Sigmoid colon (tissue), 7 donors: ENCODE measurements at regions of chr10 and their contacts with region 1.

Region 1: DNA sequence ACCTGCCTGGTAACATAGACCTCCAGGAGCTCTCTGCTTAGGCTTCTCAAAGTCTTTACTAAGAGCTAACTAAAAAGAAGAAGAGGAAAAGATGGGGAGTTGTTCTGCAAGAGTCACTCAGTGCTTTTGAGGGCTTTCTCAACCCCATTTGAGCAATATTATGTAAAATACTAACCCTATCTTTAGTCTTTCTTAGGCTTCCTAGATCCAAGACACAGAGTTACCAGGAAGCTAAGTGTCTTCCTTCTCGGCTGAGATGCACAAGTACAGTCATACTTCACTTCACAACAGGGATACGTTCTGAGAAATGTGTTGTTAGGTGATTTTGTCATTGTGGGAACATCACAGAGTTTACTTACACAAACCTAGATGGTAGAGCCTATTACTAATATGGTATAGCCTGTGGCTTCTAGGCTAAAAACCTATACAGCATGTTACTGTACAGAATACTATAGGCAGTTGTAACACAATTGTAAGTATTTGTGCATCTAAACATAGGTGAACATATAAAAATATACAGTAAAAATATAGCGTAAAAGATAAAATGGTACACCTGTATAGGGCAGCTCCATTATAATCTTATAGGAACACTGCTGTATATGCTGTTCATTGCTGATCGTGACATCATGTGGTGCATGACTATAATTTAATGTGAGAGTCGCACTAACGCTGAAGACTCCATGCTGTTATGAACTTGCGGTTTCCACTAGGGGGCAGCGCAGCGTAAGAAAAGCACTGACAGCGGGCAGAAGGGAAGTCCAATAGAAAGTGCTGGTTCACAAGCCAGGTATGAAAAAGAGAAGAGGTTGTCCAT is 16.3 kb downstream of the ANKRD22 start:
- DNase-seq: peak; percentile 91
- H3K4me3 ChIP-seq: no peak overlapping the region
- H3K27ac ChIP-seq: no peak overlapping the region
- H3K4me1 ChIP-seq: no peaks in the 10 kb centered on the region
- H3K27me3 ChIP-seq: no peaks in the 10 kb centered on the region
- CTCF ChIP-seq: peak; percentile 79 to 89 (median 81)
- EP300 ChIP-seq: no peak
- POLR2A ChIP-seq: no peak

Region 2: GRCh38 chr10:88880282-88881076 is 45.2 kb after region 1 on chr10:
- intact Hi-C with region 1: loop called (anchors 5 kb)
- DNase-seq: peak; percentile 89
- H3K4me3 ChIP-seq: peak overlapping the region; percentile 56 to 78 (median 70)
- H3K27ac ChIP-seq: peak overlapping the region; percentile 77 to 92 (median 86)
- H3K4me1 ChIP-seq: peaks cover 0 to 16% (median 7%) of the 10 kb centered on the region in 4 donors
- H3K27me3 ChIP-seq: no peaks in the 10 kb centered on the region
- CTCF ChIP-seq: peak in 1 of 4 experiments; percentile 9
- EP300 ChIP-seq: peak in 1 of 4 donors; percentile 26
- POLR2A ChIP-seq: peak; percentile 27 to 66

Region 3: GRCh38 chr10:88932539-88933256 is 97.4 kb after region 1 on chr10:
- intact Hi-C with region 1: loop called (anchors 1 kb)
- DNase-seq: peak; percentile 83
- H3K4me3 ChIP-seq: no peak overlapping the region
- H3K27ac ChIP-seq: peak overlapping the region; percentile 64 to 97 (median 70)
- H3K4me1 ChIP-seq: peaks cover 0 to 38% (median 21%) of the 10 kb centered on the region in 4 donors
- H3K27me3 ChIP-seq: no peaks in the 10 kb centered on the region
- CTCF ChIP-seq: peak; percentile 82 to 96 (median 91)
- EP300 ChIP-seq: no peak
- POLR2A ChIP-seq: no peak

Region 4: DNA sequence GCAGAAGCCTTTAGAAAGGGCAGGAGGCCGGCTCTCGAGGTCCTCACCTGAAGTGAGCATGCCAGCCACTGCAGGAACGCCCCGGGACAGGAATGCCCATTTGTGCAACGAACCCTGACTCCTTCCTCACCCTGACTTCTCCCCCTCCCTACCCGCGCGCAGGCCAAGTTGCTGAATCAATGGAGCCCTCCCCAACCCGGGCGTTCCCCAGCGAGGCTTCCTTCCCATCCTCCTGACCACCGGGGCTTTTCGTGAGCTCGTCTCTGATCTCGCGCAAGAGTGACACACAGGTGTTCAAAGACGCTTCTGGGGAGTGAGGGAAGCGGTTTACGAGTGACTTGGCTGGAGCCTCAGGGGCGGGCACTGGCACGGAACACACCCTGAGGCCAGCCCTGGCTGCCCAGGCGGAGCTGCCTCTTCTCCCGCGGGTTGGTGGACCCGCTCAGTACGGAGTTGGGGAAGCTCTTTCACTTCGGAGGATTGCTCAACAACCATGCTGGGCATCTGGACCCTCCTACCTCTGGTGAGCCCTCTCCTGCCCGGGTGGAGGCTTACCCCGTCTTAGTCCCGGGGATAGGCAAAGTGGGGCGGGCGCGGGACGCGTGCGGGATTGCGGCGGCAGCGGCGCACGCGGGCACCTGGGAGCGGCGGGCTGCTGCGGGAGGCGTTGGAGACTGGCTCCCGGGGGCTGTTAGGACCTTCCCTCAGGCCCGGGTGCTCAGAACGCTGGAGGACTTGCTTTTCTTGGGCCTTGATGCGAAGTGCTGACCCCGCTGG is 155.3 kb after region 1 on chr10 and contains the start of gene FAS:
- intact Hi-C with region 1: loop called (anchors 5 kb)
- DNase-seq: peak; percentile 91
- H3K4me3 ChIP-seq: peak within 1 kb of the TSS; percentile 72 to 88 (median 78)
- H3K27ac ChIP-seq: peak within 1 kb of the TSS; percentile 87 to 98 (median 93)
- H3K4me1 ChIP-seq: peaks cover 0 to 60% (median 33%) of the 10 kb centered on the region in 4 donors
- H3K27me3 ChIP-seq: no peaks in the 10 kb centered on the region
- CTCF ChIP-seq: no peak
- EP300 ChIP-seq: no peak
- POLR2A ChIP-seq: peak; percentile 33 to 61
- total RNA-seq, gene FAS: 14.3 to 44.6 (median 22.1) TPM

Region 5: GRCh38 chr10:89213191-89213808 is 378.0 kb after region 1 on chr10:
- intact Hi-C with region 1: loop called (anchors 2 kb)
- DNase-seq: no peak
- H3K4me3 ChIP-seq: no peak overlapping the region
- H3K27ac ChIP-seq: no peak overlapping the region
- H3K4me1 ChIP-seq: peaks cover 0 to 14% (median 7%) of the 10 kb centered on the region in 4 donors
- H3K27me3 ChIP-seq: peaks cover 0 to 26% (median 1%) of the 10 kb centered on the region in 3 donors
- CTCF ChIP-seq: peak; percentile 55 to 69 (median 58)
- EP300 ChIP-seq: no peak
- POLR2A ChIP-seq: no peak